ENCODE measurements at regions of chr2 and their contacts with region 1.

Region 1: DNA sequence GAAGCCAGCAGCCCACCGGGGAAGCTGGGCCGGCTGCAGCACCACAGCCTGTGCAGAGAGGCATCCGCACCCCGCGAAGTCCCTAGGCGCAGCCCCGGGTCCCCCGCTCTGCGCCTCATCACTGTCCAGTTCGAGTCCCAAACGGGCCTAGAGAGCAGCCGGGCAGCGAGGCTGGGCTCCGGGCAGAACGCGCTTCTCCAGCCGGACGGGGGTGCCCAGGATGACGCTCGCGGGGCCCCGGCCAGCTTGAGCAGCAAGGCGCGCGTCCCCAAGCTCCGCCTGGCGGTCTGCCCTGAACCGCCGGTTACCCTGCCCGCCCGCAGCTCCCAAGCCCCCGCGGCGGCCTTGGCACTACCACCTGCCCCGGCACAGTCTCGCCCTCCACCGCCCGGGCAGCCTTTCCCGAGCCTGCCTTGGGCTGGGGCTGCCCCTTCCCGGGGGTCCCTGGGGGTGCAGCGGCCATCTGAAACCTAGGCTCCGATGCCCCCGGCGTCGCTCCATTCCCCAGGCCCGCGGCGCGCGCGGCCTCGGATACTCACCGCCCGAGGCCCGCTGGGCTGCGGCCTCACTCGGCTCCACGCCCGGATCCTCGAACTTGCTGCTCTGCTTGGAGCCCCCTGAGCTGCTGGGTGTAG is 591 bp downstream of the SLC16A14 start:
- DNase-seq: peak; percentile 79
- ATAC-seq: peak; percentile 75

Region 2: DNA sequence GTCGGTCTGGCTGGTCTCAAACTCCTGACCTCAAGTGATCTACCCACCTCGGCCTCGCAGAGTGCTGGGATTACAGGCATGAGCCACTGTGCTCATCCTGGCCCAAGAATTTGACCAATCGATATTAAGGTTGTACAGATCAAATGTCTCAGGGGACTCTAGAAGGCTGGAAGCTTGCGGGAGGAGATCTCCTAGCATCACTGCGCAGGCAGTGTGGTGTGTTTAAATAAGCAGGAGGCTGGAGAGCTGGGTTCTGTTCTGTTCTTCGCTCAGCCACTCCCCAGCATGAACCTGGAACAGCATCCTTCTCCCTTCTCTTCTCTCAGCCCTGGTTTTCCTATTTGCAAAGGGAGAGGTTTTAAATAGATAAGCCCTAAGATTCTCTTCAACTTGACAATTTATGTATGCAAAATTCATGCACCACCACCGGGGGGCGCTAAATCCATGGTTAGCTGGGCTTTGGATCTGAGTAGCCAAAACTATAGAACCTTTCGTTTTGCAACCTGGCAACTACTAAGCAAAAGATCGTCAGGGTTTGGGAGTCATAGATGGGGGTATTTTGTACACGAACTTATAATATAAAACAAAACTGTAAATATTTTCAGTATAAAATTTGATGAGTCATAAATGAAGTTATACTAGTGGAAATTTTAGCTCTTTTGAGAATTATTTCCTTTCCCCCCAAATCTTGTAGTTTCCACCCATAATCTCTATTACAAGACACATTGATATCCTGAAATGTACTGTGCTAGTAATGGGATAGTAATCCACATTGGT is 60.0 kb before region 1 on chr2:
- intact Hi-C with region 1: loop called (anchors 2 kb)
- DNase-seq: peak; percentile 86
- ATAC-seq: peak; percentile 50

Region 3: DNA sequence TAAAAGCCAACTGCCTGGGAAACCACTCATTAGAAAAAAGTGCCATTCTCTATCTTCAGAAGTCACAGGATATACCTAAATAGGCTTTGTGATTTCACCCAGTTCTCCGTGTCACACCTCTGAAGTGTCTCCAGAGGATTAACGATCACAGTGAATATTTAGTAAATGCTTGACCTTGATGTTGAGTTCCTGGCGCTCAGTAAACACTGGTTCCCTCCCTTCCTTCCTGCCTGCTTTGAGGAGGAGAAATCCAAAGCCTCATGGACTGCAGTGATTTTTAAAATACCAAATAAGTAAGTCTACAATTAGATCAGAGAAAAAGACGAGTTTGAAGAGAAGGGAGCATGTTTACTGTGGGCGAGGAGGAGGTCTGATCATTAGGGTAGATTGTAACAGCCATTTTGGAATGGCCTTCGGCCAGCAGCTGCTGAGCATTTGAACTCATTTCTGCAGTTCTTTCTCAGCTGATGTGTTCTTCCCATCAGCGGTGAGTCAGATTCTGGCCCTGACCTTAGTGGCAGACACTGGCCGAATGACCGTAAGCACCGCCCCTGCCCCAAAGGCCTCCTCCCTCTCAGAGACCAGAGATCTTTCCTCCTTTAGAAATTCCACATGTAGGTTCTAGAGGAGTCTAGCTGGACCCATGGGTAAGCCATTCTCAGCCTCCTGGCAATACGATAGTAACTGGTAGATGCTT is 62.7 kb after region 1 on chr2:
- intact Hi-C with region 1: loop called (anchors 5 kb)
- DNase-seq: peak; percentile 77
- ATAC-seq: peak; percentile 87

Region 4: DNA sequence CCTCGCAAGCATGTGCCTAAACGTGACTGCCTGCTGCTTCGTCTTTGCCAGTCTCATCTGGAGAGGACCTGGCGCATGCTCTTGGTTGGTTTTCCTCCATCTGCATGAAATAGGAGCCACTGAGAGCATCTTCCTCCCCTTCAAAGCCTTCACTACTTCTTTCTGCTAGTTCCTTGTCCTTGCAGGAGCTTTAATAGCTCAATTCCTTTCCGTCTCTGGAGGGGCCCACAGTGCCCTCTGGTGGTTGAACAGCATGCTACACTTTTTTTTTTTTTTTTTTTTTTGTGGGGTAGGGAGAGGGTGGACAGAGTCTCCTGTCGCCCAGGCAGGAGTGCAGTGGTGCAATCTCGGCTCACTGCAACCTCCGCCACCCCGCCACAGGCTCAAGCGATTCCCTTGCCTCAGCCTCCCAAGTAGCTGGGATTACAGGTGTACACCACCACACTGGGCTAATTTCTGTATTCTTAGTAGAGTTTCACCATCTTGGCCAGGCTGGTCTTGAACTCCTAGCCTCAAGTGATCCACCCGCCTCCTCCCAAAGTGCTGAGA is 92.1 kb after region 1 on chr2:
- intact Hi-C with region 1: loop called (anchors 1 kb)
- DNase-seq: peak; percentile 74
- ATAC-seq: peak; percentile 71